ENCODE measurements at regions of chr7 and their contacts with region 1.

Region 1: GRCh38 chr7:105013221-105013815 is 687 bp upstream of the KMT2E start:
- DNase-seq: peak; percentile 97
- ATAC-seq: peak; percentile 63
- H3K4me3 Mint-ChIP-seq: peak overlapping the region; percentile 96
- H3K27ac Mint-ChIP-seq: peak overlapping the region; percentile 100
- H3K4me1 Mint-ChIP-seq: peaks cover 14% of the 10 kb centered on the region
- H3K27me3 Mint-ChIP-seq: no peaks in the 10 kb centered on the region

Region 2: DNA sequence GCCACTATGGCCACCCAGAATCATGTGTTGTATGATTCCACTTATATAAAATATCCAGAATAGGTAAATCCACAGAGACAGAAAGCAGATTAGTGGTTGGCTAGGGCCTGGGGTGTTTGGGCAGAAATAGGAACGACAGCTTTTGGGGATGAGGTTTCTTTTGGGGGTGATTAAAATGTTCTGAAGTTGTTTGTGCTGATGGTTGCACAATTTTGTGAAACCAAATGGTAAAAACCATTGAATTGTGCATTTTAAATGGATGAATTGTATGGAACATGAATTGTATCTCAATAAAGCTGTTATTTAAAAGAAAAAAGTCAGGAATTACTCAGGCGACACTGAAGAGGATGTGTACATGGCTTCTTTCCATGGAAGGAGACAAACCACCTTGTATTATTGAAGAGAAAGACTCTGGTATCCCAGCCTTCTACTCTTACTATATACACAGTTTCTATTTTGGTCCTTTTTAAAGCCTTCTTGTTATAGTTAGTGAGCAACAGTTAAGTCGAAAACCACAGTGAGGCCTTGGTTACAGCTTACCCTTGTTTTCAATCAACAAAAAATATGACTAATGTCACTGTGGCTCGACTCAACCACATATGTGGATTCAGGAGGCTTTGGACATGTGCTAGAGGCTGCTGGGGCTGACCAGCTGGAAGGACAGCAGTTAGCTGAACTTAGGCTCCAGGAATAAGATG is 56.4 kb before region 1 on chr7:
- CTCF ChIA-PET with region 1: no interaction called
- POLR2A ChIA-PET with region 1: interaction called, 4 read pairs
- intact Hi-C with region 1: loop called (anchors 1 kb)
- DNase-seq: peak; percentile 64
- ATAC-seq: peak; percentile 87
- H3K4me3 Mint-ChIP-seq: peak overlapping the region; percentile 38
- H3K27ac Mint-ChIP-seq: peak overlapping the region; percentile 96
- H3K4me1 Mint-ChIP-seq: peaks cover 47% of the 10 kb centered on the region
- H3K27me3 Mint-ChIP-seq: no peaks in the 10 kb centered on the region

Region 3: DNA sequence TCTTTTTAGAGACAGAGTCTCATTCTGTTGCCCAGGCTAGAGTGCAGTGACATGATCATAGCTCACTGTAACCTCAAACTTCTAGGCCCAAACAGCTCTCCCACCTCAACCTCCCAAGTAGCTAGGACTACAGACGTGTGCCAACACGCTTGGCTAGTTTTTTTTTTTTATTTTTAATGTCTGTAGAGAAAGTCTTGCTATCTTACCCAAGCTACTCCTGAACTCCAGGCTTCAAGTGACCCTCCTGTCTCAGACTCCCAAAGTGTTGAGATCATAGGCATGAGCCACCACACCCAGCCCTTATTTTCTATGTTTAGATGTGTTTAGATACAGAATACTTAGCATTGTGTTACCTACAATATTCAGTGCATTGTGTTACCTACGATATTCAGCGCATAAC is 47.1 kb after region 1 on chr7:
- CTCF ChIA-PET with region 1: interaction called, 4 read pairs
- POLR2A ChIA-PET with region 1: interaction called, 3 read pairs
- intact Hi-C with region 1: loop called in 1 of 2 experiments (anchors 5 kb)
- DNase-seq: no peak
- ATAC-seq: no peak
- H3K4me3 Mint-ChIP-seq: no peak overlapping the region
- H3K27ac Mint-ChIP-seq: no peak overlapping the region
- H3K4me1 Mint-ChIP-seq: peaks cover 56% of the 10 kb centered on the region
- H3K27me3 Mint-ChIP-seq: no peaks in the 10 kb centered on the region

Region 4: DNA sequence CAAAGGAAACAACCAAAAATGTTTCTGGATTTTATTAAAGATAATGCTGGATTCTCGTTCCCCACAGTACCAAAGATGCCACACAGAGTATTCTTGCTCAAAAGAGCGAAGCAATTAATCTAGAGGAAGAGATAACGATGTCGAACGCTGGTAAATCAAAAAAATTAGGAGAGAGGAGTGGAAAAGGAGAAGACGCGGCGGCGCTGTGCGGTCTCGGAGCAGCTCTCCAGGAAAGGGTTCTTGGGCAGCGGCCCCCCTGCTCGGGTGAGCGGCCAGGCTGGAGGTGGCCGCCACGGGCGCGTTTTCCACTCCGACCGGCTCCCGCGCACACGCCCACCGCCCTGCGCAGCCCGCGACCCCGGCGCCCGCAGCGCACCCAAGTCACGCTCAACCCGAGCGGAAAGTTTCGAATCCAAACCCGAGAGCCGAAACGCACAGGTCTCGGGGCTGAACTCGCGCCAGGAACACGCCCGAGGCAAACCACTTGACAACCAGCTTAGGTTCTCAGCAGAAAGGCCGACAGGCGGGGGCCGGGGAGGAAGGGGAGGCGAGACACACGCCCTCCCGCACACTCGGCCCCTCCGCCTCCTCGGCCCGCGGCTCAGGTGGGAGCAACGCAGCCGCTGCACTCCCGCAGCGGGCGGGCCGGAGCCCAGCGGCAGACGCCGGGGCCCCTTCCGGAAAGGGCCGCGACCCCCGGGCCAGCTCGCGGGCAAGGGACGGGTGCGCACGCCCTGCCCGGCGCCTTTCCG is 374.5 kb after region 1 on chr7:
- CTCF ChIA-PET with region 1: no interaction called
- POLR2A ChIA-PET with region 1: no interaction called
- intact Hi-C with region 1: loop called in 1 of 2 experiments (anchors 5 kb)
- DNase-seq: peak; percentile 67
- ATAC-seq: peak; percentile 40
- H3K4me3 Mint-ChIP-seq: peak overlapping the region; percentile 77
- H3K27ac Mint-ChIP-seq: peak overlapping the region; percentile 55
- H3K4me1 Mint-ChIP-seq: peaks cover 35% of the 10 kb centered on the region
- H3K27me3 Mint-ChIP-seq: no peaks in the 10 kb centered on the region

Region 5: DNA sequence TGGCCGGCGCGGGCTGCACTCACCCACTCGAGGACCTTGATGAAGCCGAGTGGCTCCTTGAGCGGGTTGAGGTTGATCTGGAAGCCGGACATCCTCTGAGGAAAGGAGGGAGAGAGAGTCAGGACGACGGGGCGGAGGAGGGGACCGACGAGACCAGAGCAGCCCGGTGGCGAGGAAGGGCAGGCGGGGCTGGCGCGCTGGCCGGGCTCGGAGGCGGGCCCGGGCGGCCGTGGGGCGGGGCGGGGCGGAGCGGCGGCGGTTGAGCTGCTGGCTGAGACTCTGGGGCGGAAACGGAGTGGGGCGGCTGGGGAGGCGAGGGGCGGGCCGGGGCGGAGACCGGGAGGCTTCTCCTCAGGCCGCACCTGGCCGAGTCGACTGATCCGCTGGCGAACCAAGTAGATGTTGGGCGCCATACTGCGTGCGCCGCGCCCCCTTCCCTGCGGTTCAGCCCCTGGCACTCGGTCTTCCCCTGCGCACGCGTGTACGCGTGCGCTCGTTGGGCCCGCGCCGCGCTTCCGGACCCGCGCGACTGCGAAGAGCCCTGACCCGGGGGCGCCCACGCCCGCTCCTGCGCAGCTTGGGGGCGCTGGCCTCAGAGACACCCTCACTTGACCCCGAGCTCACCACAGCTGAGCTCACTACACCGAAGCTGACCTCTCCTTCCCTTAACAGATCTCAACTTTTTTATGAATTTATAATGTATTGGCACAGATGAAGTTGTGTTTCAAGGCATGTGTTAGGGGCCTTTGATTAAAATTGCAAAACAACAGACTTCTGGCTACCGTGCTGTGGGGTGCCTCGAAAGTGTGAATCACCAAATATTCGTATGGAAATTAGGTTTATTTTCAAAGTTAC is 1099.0 kb after region 1 on chr7 and contains the start of gene SYPL1:
- CTCF ChIA-PET with region 1: no interaction called
- POLR2A ChIA-PET with region 1: no interaction called
- intact Hi-C with region 1: loop called in 1 of 2 experiments (anchors 2 kb)
- DNase-seq: peak; percentile 95
- ATAC-seq: peak; percentile 86
- H3K4me3 Mint-ChIP-seq: peak within 1 kb of the TSS; percentile 79
- H3K27ac Mint-ChIP-seq: peak within 1 kb of the TSS; percentile 89
- H3K4me1 Mint-ChIP-seq: peaks cover 64% of the 10 kb centered on the region
- H3K27me3 Mint-ChIP-seq: no peaks in the 10 kb centered on the region
- total RNA-seq, gene SYPL1: 23.7 to 28.8 TPM

Region 6: GRCh38 chr7:106865130-106866041 is 1852.1 kb after region 1 on chr7 and contains the start of gene PIK3CG:
- CTCF ChIA-PET with region 1: no interaction called
- POLR2A ChIA-PET with region 1: no interaction called
- intact Hi-C with region 1: loop called in 1 of 2 experiments (anchors 5 kb)
- DNase-seq: no peak
- ATAC-seq: peak; percentile 79
- H3K4me3 Mint-ChIP-seq: peak within 1 kb of the TSS; percentile 83
- H3K27ac Mint-ChIP-seq: peak within 1 kb of the TSS; percentile 92
- H3K4me1 Mint-ChIP-seq: peaks cover 75% of the 10 kb centered on the region
- H3K27me3 Mint-ChIP-seq: no peaks in the 10 kb centered on the region
- total RNA-seq, gene PIK3CG: 9.9 to 14.3 TPM

Measured in activated CD4-positive, alpha-beta T cell treated with anti-CD3 and anti-CD28 coated beads for 36 hours (primary cell).